Psoas muscle (tissue), 8 donors: ENCODE measurements at regions of chr2 and their contacts with region 1.

Region 1: GRCh38 chr2:68467077-68467960 is at the starts of genes APLF and FBXO48:
- DNase-seq: peak; percentile 96 to 98
- ATAC-seq: peak; percentile 98
- H3K4me3 ChIP-seq: peak within 1 kb of the TSS; percentile 96
- H3K27ac ChIP-seq: peak within 1 kb of the TSS; percentile 88
- H3K4me1 ChIP-seq: peaks cover 8% of the 10 kb centered on the region
- H3K27me3 ChIP-seq: no peaks in the 10 kb centered on the region
- CTCF ChIP-seq: no peak
- total RNA-seq, gene APLF: 2.8 to 4.3 (median 3.6) TPM
- total RNA-seq, gene FBXO48: 0.90 to 2.4 (median 1.6) TPM

Region 2: DNA sequence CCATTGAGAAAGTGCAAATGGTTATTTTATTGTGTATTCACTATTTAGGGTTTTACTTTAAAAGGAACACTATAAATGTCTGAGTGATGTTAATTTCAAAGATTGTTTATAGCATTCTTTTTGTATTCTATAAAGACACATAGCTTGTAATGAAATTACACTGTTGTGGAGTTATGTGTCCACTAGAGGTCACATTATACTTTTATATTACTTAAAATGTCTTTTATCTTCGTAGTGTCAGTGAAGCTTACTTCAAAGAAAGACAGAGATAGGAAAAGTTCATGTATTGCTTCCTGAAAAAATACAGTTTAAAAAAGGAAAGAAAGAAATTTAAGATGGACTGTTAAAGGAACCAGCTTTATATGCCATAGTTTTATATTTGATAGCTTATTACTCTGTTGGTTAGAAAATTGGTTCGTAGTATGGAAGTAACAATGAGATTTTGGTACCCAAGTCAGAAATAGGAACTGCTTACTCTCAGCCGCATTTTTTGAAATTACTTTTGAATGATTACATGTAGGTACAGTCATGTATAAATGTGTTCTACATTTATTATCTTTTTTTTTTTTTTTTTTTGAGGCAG is 20.5 kb after region 1 on chr2:
- intact Hi-C with region 1: no loop called
- DNase-seq: no peak
- ATAC-seq: no peak
- H3K4me3 ChIP-seq: no peak overlapping the region
- H3K27ac ChIP-seq: no peak overlapping the region
- H3K4me1 ChIP-seq: peaks cover 4% of the 10 kb centered on the region
- H3K27me3 ChIP-seq: no peaks in the 10 kb centered on the region
- CTCF ChIP-seq: peak; percentile 49

Region 3: GRCh38 chr2:68521037-68521436 is 53.7 kb after region 1 on chr2:
- intact Hi-C with region 1: loop called in 1 of 2 experiments (anchors 5 kb)
- DNase-seq: no peak
- ATAC-seq: no peak
- H3K4me3 ChIP-seq: no peak overlapping the region
- H3K27ac ChIP-seq: no peak overlapping the region
- H3K4me1 ChIP-seq: no peaks in the 10 kb centered on the region
- H3K27me3 ChIP-seq: no peaks in the 10 kb centered on the region
- CTCF ChIP-seq: no peak

Region 4: GRCh38 chr2:68620772-68621171 is 153.5 kb after region 1 on chr2:
- intact Hi-C with region 1: no loop called
- DNase-seq: no peak
- ATAC-seq: no peak
- H3K4me3 ChIP-seq: no peak overlapping the region
- H3K27ac ChIP-seq: no peak overlapping the region
- H3K4me1 ChIP-seq: no peaks in the 10 kb centered on the region
- H3K27me3 ChIP-seq: no peaks in the 10 kb centered on the region
- CTCF ChIP-seq: no peak

Region 5: GRCh38 chr2:68715353-68716041 is 248.2 kb after region 1 on chr2:
- intact Hi-C with region 1: loop called (anchors 2 to 5 kb)
- DNase-seq: peak; percentile 30 to 57
- ATAC-seq: peak; percentile 64 to 80 (median 78)
- H3K4me3 ChIP-seq: no peak overlapping the region
- H3K27ac ChIP-seq: no peak overlapping the region
- H3K4me1 ChIP-seq: no peaks in the 10 kb centered on the region
- H3K27me3 ChIP-seq: no peaks in the 10 kb centered on the region
- CTCF ChIP-seq: peak; percentile 62